ENCODE measurements at regions of chr9 and their contacts with region 1.

Region 1: DNA sequence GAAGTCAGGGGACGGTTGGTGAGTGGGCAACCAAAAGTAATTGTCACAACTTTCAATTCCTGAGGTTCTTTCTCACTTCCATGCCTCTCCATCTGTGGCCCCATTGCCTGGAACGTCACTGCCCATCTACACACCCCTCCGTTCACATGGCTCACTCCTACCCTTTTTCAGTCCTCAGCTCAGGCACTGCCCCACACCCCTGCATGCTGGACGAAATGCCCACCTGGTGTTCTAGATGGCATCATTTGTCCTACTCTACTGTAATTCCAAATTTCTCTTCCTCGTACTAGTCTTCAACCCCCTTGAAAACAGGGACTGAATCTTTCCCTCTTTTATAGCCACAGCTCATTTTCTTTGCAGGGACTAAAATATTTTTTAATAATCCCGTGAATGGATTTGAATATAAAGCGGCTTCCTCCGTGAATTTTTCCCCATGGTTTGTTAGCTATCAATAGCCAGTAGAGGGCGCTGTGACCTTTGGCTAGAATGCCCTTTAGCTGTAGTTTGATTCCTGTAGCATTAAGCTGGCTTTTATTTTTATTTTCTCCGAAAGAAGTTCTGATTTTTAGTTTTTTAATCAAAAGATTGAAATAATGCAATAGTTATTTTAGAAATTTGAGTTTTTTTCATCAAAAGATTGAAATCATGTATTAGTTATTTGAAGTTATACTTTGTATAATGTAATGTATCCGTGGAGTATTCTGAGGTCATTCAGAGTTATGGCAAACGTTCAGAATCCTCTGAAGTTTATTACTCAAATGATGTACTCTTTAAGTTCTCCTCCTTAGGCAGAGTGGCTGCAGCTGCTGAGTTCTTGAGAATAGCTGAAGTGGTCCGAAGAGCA is 232.1 kb downstream of the SH3GL2 start:
- DNase-seq: no peak
- H3K4me3 ChIP-seq: no peak overlapping the region
- H3K27ac ChIP-seq: no peak overlapping the region
- H3K4me1 ChIP-seq: no peaks in the 10 kb centered on the region
- H3K27me3 ChIP-seq: peaks cover 0 to 18% (median 0%) of the 10 kb centered on the region in 7 donors
- CTCF ChIP-seq: peak in 10 of 11 experiments; percentile 12 to 76 (median 60)
- POLR2A ChIP-seq: no peak

Region 2: DNA sequence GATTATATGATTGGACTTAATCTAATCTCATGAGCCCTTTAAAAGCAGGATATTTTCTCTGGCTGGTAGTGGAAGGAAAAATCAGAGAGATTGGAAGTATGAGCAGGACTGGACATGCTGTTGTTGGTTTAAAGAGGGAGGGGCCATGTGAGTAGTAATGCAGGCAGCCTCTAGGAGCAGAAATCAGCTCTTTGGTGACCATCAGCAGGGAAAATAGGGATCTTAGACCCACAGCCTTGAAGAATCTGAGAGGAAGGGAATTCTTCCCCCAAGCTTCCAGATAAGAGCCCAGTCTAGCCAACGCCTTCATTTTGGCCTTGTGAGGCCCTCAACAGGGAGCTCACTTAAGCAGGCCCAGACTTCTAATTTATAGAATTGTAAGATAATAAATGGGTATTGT is 222.6 kb before region 1 on chr9:
- intact Hi-C with region 1: no loop called
- DNase-seq: no peak
- H3K4me3 ChIP-seq: no peak overlapping the region
- H3K27ac ChIP-seq: no peak overlapping the region
- H3K4me1 ChIP-seq: no peaks in the 10 kb centered on the region
- H3K27me3 ChIP-seq: no peaks in the 10 kb centered on the region
- CTCF ChIP-seq: no peak
- POLR2A ChIP-seq: no peak

Region 3: GRCh38 chr9:17695482-17695881 is 115.5 kb before region 1 on chr9:
- intact Hi-C with region 1: no loop called
- DNase-seq: no peak
- H3K4me3 ChIP-seq: no peak overlapping the region
- H3K27ac ChIP-seq: no peak overlapping the region
- H3K4me1 ChIP-seq: no peaks in the 10 kb centered on the region
- H3K27me3 ChIP-seq: no peaks in the 10 kb centered on the region
- CTCF ChIP-seq: no peak
- POLR2A ChIP-seq: no peak

Region 4: DNA sequence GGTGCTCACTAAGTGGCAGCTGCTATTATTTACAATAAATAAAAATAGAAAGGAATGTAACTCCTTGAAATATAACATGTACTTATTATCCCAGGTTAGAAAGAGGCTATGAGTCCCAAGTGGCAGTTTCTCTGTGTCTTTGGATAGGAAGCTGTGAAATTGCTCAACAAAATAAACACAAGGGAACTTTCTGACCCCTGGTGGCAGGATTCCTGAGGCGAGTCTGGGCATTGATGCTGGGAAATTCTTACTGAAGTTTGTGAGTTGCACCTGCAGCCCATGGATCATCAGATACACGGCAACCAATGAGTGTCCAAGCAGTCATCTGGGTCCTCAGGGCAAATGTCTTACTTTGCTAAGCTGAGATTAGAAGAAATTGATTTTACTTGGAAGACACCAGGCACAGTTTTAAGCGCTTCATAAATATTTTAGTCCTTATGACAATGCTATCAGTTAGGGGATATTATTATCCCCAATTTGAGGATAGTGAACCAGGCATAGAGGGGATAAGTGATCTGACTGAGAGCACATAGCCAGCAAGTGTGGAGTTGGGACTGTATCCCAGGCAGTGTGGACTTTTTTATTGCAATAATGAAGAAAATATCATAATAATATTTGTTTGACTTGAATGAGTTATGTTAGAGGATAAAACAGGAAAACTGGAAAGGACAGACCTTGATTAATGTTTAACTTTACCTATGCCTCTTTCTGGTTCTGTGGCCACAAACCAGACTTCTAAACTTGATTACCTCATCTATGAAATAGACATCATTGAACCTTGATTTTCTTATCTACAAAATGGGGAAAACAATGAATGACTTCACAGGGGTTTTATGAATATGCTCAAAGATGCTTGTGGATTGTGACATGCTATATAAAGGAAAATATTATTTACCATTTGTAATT is 397.5 kb after region 1 on chr9:
- intact Hi-C with region 1: loop called (anchors 5 kb)
- DNase-seq: no peak
- H3K4me3 ChIP-seq: no peak overlapping the region
- H3K27ac ChIP-seq: no peak overlapping the region
- H3K4me1 ChIP-seq: no peaks in the 10 kb centered on the region
- H3K27me3 ChIP-seq: no peaks in the 10 kb centered on the region
- CTCF ChIP-seq: peak in 3 of 11 experiments; percentile 13 to 22 (median 19)
- POLR2A ChIP-seq: no peak